HAP-1 (cell line): ENCODE measurements at regions of chr6 and their contacts with region 1.

Region 1: GRCh38 chr6:150004783-150005717 is 20.3 kb downstream of the RAET1L start:
- DNase-seq: peak; percentile 92 to 98
- H3K4me3 ChIP-seq: peak overlapping the region; percentile 91
- H3K4me1 ChIP-seq: no peaks in the 10 kb centered on the region
- H3K27me3 ChIP-seq: no peaks in the 10 kb centered on the region

Region 2: DNA sequence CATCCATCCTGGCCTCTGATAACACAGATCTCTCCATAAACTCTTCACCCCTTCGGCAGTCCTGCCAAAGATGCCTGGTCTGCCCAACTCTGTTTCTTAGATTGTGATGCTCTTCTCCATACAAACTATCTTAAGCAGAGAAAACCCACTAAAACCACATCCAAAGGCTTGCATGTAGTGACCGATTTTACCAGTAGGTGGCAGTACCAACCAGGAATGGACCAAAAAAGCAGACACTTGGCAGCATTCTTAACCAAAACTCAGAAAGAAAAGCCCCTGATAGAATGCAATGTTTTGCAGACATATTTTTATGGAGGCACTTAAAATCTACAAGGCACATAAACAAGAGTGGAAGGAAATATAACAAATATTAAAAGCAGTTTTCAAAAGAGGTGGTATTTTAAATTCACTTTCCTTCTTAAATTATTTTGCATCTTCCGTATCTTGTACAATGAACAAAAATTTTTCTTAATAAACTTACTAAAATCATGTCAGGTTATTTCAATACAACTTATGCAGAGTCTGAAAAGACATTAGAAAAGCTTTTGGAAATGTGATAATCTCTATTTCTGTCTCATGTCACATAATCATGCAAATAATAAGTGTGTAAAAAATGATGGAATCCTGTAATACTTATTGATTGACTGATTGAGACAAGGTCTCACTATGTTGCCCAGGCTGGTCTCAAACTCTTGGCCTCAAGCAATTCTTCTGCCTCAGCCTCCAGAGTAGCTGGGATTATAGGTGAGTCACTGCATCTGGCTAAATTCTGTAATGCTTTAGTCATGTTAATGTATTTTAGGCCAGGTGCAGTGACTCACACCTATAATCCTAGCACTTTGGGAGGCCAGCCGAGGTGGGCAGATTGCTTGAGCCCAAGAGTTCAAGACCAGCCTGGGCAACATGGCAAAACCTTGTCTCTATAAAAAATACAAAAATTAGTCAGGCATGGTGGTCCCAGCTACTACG is 170.3 kb before region 1 on chr6:
- in situ Hi-C with region 1: loop called (anchors 25 kb)
- DNase-seq: peak; percentile 22 to 79
- H3K4me3 ChIP-seq: no peak overlapping the region
- H3K4me1 ChIP-seq: no peaks in the 10 kb centered on the region
- H3K27me3 ChIP-seq: no peaks in the 10 kb centered on the region

Region 3: DNA sequence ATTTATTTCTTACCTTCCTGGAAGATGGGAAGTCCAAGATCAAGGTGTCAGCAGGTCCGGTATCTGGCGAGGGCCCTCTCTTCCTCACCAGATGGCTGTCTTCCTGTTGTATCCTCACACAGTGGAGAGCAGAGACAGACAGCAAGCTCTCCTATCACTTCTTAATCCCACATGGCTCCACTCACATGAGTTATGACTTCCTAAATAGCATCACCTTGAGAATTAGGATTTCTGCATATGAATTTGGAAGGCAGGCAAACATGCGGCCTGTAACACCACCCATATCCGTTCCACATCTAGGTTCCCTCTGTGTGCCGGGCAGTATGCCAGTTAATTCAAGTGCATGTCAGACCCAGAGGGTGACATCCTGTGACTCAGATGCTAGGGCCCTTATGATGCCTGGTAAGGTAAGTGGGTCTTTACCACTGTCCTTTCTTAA is 109.2 kb before region 1 on chr6:
- in situ Hi-C with region 1: no loop called
- DNase-seq: no peak
- H3K4me3 ChIP-seq: no peak overlapping the region
- H3K4me1 ChIP-seq: no peaks in the 10 kb centered on the region
- H3K27me3 ChIP-seq: no peaks in the 10 kb centered on the region

Region 4: DNA sequence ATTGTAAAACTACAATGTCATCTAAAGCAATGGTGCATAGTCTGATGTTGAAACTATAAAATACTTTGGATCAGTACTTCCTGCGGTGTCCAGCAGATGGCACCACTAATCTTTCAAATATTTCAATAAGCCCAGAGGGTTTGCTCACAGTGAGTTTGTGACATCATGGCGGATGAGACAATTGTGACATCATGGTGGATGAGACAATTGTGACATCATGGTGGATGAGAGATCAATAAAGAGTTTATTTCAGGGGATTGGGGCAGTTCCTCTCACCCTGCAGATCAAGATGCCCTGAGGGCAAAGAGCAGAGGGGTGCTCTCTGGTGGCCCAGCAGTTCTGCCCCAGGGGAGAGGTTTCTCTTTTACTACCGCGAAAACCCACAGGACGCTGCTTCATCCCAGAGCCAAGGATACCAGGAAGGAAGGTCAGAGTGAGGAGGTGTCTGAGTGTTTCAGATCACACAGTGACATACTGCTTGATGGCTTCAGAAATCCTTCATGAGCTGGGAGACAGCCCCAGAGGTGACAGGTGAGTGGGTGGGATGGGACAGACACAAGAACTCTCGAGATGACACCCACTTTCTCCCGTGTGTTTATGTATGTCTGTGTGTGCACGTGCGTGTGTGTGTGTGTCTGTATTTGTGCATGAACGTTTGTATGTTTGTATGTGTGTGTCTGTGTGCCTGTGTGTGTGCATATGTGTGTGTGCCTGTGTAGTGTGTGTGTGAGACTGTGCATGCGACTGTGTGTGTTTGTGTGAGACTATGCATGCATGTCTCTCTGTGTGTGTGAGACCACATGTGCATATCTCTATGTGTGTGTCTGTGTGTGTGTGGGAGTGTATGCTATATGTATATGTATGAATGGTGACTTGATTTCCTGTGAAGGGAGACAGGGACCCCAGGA is 70.5 kb before region 1 on chr6:
- in situ Hi-C with region 1: loop called (anchors 5 kb)
- DNase-seq: peak; percentile 52 to 76
- H3K4me3 ChIP-seq: no peak overlapping the region
- H3K4me1 ChIP-seq: no peaks in the 10 kb centered on the region
- H3K27me3 ChIP-seq: peaks cover 14% of the 10 kb centered on the region